A673 (cell line): ENCODE measurements at regions of chr2 and their contacts with region 1.

Region 1: GRCh38 chr2:44167940-44168680 is 565 bp upstream of the PPM1B start:
- DNase-seq: peak; percentile 100
- H3K4me3 ChIP-seq: peak overlapping the region; percentile 49
- H3K27ac ChIP-seq: peak overlapping the region; percentile 94
- H3K4me1 ChIP-seq: peaks cover 13% of the 10 kb centered on the region
- H3K27me3 ChIP-seq: no peaks in the 10 kb centered on the region
- CTCF ChIP-seq: no peak

Region 2: GRCh38 chr2:44071454-44072046 is 96.6 kb before region 1 on chr2:
- CTCF ChIA-PET with region 1: no interaction called
- POLR2A ChIA-PET with region 1: interaction called, 12 read pairs
- intact Hi-C with region 1: no loop called
- DNase-seq: no peak
- H3K4me3 ChIP-seq: no peak overlapping the region
- H3K27ac ChIP-seq: no peak overlapping the region
- H3K4me1 ChIP-seq: no peaks in the 10 kb centered on the region
- H3K27me3 ChIP-seq: no peaks in the 10 kb centered on the region
- CTCF ChIP-seq: no peak

Region 3: GRCh38 chr2:44130441-44130840 is 37.7 kb before region 1 on chr2:
- CTCF ChIA-PET with region 1: no interaction called
- POLR2A ChIA-PET with region 1: no interaction called
- intact Hi-C with region 1: loop called (anchors 5 kb)
- DNase-seq: peak; percentile 68
- H3K4me3 ChIP-seq: no peak overlapping the region
- H3K27ac ChIP-seq: no peak overlapping the region
- H3K4me1 ChIP-seq: peaks cover 11% of the 10 kb centered on the region
- H3K27me3 ChIP-seq: no peaks in the 10 kb centered on the region
- CTCF ChIP-seq: no peak

Region 4: GRCh38 chr2:44211183-44211582 is 43.1 kb after region 1 on chr2:
- CTCF ChIA-PET with region 1: no interaction called
- POLR2A ChIA-PET with region 1: no interaction called
- intact Hi-C with region 1: loop called (anchors 5 kb)
- DNase-seq: no peak
- H3K4me3 ChIP-seq: no peak overlapping the region
- H3K27ac ChIP-seq: no peak overlapping the region
- H3K4me1 ChIP-seq: no peaks in the 10 kb centered on the region
- H3K27me3 ChIP-seq: no peaks in the 10 kb centered on the region
- CTCF ChIP-seq: no peak